Stomach (tissue), 19 donors: ENCODE measurements at regions of chr14 and their contacts with region 1.

Region 1: DNA sequence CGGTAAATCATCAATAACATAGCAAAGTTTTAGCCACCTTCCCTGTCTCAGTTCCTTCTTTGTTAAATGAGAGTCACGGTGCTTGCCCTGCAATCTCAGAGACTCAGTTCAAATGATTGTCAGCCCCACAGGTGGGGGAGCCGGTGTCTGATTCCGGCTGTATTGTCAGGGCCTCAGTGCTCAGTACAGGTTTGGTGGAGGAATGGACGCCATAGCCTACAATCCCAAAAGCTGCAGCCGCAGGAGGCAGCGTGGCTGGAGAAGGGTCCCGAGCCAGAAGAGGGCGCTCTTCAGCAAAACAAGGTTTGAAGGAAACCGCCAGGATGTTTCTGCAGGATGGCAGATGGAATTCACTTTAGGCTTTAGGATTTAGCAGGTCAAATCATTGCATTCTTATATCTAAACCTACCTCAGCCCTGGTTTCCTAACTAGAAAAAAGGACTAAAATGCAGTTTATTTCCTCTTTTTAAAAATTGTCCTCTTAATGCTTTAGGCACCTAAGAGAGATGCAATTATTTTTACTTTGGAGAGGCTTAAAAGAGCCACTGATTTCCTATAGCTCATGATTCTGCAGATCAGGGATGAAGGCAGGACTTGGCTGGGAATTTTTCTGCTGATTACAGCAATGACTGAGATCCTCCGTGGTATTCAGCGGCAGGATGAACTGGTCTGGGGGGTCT is 29.2 kb downstream of the FOS start:
- DNase-seq: peak; percentile 91 to 95
- H3K4me3 ChIP-seq: no peak overlapping the region
- H3K27ac ChIP-seq: no peak overlapping the region
- H3K4me1 ChIP-seq: peaks cover 13 to 32% (median 23%) of the 10 kb centered on the region in 4 donors
- H3K27me3 ChIP-seq: no peaks in the 10 kb centered on the region
- CTCF ChIP-seq: peak in 5 of 7 experiments; percentile 80 to 89 (median 85)
- EP300 ChIP-seq: no peak
- POLR2A ChIP-seq: no peak

Region 2: GRCh38 chr14:75132382-75133086 is 175.3 kb before region 1 on chr14:
- intact Hi-C with region 1: loop called (anchors 5 kb)
- DNase-seq: peak in 1 of 2 donors; percentile 91
- H3K4me3 ChIP-seq: no peak overlapping the region
- H3K27ac ChIP-seq: peak overlapping the region in 4 of 5 donors; percentile 14 to 71 (median 36)
- H3K4me1 ChIP-seq: peaks cover 13 to 28% (median 22%) of the 10 kb centered on the region in 4 donors
- H3K27me3 ChIP-seq: no peaks in the 10 kb centered on the region
- CTCF ChIP-seq: peak in 5 of 7 experiments; percentile 62 to 88 (median 75)
- EP300 ChIP-seq: no peak
- POLR2A ChIP-seq: no peak

Region 3: DNA sequence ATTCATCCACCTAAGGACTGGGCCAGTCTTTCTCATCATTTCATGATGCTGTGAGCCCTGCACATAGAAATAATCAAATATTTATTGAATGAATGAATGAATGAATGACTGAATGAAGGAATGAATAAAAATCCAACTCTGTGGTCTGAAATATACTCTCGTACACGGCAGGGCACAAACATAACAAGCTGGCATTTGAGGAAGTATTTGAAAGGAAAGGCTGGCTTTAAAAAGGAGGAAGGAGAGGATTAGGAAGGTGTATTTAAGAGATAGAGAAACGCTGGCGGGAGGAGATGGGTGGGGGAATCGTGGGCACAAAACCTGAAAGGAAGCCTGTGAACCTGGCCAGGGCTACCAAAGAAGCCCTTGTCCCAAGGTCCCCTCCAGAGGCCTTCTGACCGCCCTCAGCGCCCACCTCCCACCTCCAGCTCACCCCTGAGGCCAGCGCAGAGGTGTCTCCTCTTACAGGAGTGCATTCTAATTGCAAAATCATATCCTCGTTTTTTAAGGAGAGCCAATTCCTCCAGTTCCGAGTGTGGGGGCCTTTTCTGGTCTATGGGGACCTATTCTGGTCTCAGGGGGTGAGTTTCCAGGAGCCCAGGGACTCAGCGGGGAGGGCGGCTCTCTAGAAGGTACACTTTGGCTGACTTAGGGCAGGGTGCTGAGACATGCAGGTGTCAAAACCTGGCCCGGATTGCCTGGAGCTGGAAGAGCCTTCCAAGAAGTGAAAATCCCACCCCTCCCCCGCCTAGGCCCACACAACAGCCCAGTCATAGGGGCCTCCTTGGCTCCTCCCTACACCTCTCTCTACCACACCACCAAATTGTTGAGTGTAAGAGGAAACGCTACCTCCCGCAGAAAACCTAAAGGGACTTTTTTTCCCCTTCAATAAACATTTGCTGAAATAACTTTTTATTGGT is 111.3 kb after region 1 on chr14:
- intact Hi-C with region 1: no loop called
- DNase-seq: peak; percentile 63 to 75
- H3K4me3 ChIP-seq: peak overlapping the region in 3 of 4 donors; percentile 19 to 27 (median 24)
- H3K27ac ChIP-seq: peak overlapping the region in 2 of 5 donors; percentile 29 to 47
- H3K4me1 ChIP-seq: peaks cover 0 to 8% (median 5%) of the 10 kb centered on the region in 4 donors
- H3K27me3 ChIP-seq: no peaks in the 10 kb centered on the region
- CTCF ChIP-seq: no peak
- EP300 ChIP-seq: no peak
- POLR2A ChIP-seq: no peak

Region 4: GRCh38 chr14:75493580-75494130 is 185.8 kb after region 1 on chr14:
- intact Hi-C with region 1: loop called (anchors 5 kb)
- DNase-seq: no peak
- H3K4me3 ChIP-seq: no peak overlapping the region
- H3K27ac ChIP-seq: no peak overlapping the region
- H3K4me1 ChIP-seq: peaks cover 0 to 6% (median 0%) of the 10 kb centered on the region in 4 donors
- H3K27me3 ChIP-seq: no peaks in the 10 kb centered on the region
- CTCF ChIP-seq: no peak
- EP300 ChIP-seq: no peak
- POLR2A ChIP-seq: no peak

Region 5: DNA sequence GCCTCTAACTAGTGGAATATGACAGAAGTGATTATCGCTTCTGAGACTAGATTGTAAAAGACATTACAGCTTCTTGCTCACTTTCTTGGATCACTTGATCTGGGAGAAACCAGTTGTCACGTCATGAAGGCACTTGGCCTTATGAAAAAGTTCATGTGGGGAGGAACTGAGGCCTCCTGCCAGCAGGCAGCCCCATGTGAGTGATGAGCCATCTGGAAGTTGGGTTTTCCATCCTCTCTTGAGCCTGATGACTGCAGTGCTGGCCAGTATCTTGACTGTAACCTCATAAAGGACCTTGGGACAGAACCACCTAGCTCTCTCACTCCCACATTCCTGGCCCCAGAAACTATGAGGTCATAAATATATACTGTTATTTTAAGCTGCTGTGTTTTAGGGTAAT is 381.2 kb after region 1 on chr14:
- intact Hi-C with region 1: no loop called
- DNase-seq: peak in 1 of 2 donors; percentile 49
- H3K4me3 ChIP-seq: no peak overlapping the region
- H3K27ac ChIP-seq: no peak overlapping the region
- H3K4me1 ChIP-seq: peaks cover 0 to 6% (median 0%) of the 10 kb centered on the region in 4 donors
- H3K27me3 ChIP-seq: no peaks in the 10 kb centered on the region
- CTCF ChIP-seq: no peak
- EP300 ChIP-seq: no peak
- POLR2A ChIP-seq: no peak